Activated CD4-positive, alpha-beta T cell treated with anti-CD3 and anti-CD28 coated beads, Interleukin-2, amount 10 ng/mL, durations not matched to agents 24 days and 14 days (primary cell): ENCODE measurements at regions of chr1 and their contacts with region 1.

Region 1: GRCh38 chr1:50368179-50369012 is 54.8 kb downstream of the DMRTA2 start:
- DNase-seq: peak; percentile 80
- H3K4me3 Mint-ChIP-seq: no peak overlapping the region
- H3K27ac Mint-ChIP-seq: no peak overlapping the region
- H3K4me1 Mint-ChIP-seq: peaks cover 1% of the 10 kb centered on the region
- H3K27me3 Mint-ChIP-seq: peaks cover 37% of the 10 kb centered on the region

Region 2: GRCh38 chr1:50605186-50605875 is 236.9 kb after region 1 on chr1:
- intact Hi-C with region 1: loop called (anchors 1 kb)
- DNase-seq: peak; percentile 66
- H3K4me3 Mint-ChIP-seq: no peak overlapping the region
- H3K27ac Mint-ChIP-seq: no peak overlapping the region
- H3K4me1 Mint-ChIP-seq: no peaks in the 10 kb centered on the region
- H3K27me3 Mint-ChIP-seq: no peaks in the 10 kb centered on the region

Region 3: DNA sequence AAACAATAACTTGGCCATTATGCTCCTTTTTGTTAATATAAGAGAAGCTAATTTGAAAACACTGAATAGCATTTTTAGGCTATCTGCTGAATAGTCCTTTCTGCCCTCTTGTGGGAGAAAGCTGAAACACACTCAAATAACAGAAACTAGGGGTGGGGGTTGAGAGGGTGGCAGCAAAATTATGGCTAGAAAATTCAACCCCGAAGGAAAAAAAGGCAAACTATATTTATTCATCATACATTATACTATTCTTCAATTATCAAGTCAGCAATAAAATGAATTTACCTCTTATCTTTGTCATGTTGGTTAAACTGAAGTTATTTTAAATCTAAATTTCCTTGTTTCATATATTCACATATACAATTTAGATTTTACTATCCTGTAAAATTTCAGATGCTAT is 335.7 kb after region 1 on chr1:
- intact Hi-C with region 1: loop called (anchors 1 kb)
- DNase-seq: peak; percentile 69
- H3K4me3 Mint-ChIP-seq: no peak overlapping the region
- H3K27ac Mint-ChIP-seq: no peak overlapping the region
- H3K4me1 Mint-ChIP-seq: no peaks in the 10 kb centered on the region
- H3K27me3 Mint-ChIP-seq: no peaks in the 10 kb centered on the region

Region 4: GRCh38 chr1:50735443-50735842 is 367.0 kb after region 1 on chr1:
- intact Hi-C with region 1: loop called (anchors 10 kb)
- DNase-seq: peak; percentile 53
- H3K4me3 Mint-ChIP-seq: no peak overlapping the region
- H3K27ac Mint-ChIP-seq: no peak overlapping the region
- H3K4me1 Mint-ChIP-seq: peaks cover 13% of the 10 kb centered on the region
- H3K27me3 Mint-ChIP-seq: no peaks in the 10 kb centered on the region